IMR-90 (cell line): ENCODE measurements at regions of chr20 and their contacts with region 1.

Region 1: GRCh38 chr20:63272584-63273579 is at the start of gene ARFGAP1:
- DNase-seq: peak; percentile 87
- ATAC-seq: peak; percentile 93
- H3K4me3 ChIP-seq: peak within 1 kb of the TSS; percentile 72
- H3K27ac ChIP-seq: peak within 1 kb of the TSS; percentile 78
- H3K4me1 ChIP-seq: peaks cover 12% of the 10 kb centered on the region
- H3K27me3 ChIP-seq: peaks cover 1% of the 10 kb centered on the region; the same call in 1 of the 2 replicates
- CTCF ChIP-seq: no peak
- POLR2A ChIP-seq: peak; percentile 85
- RAD21 ChIP-seq: no peak
- total RNA-seq, gene ARFGAP1: 54.7 and 59.1 TPM in 2 replicates

Region 2: DNA sequence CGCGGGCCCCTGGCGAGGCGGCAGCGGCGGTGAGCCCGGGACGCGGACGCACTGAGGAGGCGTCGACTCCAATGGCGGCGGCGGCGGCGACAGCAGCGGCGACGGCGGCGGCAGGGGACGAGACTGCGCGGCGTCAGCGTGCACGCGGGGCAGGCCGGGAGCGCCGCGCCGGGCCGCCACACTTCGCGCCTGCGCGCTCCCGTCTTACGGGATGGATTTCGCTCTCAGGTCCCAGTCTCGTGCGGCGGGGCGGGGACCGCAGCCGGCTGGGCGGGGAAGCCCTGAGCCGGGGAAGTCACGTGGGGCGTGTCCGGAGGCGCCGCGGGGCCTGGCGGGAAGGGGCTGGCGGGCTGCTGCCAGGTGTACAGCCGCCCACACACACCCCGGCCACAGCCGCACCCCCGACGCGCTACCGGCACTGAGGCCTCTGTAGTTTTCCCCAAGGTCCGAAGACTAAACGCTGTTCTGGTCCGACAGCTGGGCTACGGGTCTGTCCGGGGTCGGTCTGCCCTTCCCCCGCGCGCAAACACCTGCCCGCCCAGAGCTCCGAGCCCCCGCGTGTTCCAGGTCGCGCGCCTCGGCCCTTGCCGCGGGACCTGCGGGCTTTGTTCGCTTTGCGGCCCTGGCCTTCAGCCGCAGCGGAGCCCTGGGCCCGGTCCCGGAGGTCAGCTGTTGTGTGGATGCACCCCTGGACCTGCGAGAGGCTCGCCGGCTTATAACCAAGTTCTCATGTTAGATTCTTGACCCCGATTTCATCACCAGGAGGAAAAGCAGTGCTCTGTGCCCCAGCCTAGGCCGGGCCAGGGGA is 56.6 kb before region 1 on chr20 and contains the start of gene YTHDF1:
- CTCF ChIA-PET with region 1: no interaction called
- POLR2A ChIA-PET with region 1: no interaction called
- dilution Hi-C with region 1: no loop called
- in situ Hi-C with region 1: no loop called
- intact Hi-C with region 1: loop called (anchors 5 kb)
- DNase-seq: peak; percentile 90
- ATAC-seq: peak; percentile 96
- H3K4me3 ChIP-seq: peak within 1 kb of the TSS; percentile 89
- H3K27ac ChIP-seq: peak within 1 kb of the TSS; percentile 79
- H3K4me1 ChIP-seq: peaks cover 6% of the 10 kb centered on the region
- H3K27me3 ChIP-seq: peaks cover 16% of the 10 kb centered on the region; the same call in 1 of the 2 replicates
- CTCF ChIP-seq: no peak
- POLR2A ChIP-seq: peak; percentile 61; the same call in 1 of the 2 replicates
- RAD21 ChIP-seq: no peak
- total RNA-seq, gene YTHDF1: 10.9 and 13.9 TPM in 2 replicates

Region 3: DNA sequence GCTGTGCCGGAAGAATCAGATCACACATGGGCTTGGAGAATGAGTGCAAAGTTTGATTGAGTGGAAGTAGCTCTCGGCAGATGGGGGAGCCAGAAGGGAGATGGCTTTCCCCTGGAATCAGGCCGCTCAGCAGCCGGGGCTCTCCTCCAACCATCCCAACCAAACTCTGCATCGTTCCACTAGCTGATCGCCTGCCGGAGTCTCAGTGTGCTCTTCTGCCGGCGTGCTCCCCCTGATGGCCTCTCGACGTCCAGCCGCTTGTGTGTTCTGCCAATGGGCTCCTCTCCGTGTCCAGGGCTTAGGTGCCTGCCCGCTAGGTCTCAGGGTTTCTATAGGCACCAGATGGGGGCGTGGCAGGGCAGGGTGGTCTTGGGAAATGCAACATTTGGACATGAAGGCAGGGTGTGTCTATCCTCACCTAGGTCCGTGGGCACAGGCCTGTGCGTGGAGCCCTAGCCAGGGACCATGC is 42.0 kb before region 1 on chr20:
- CTCF ChIA-PET with region 1: no interaction called
- POLR2A ChIA-PET with region 1: interaction called, 5 read pairs
- dilution Hi-C with region 1: no loop called
- in situ Hi-C with region 1: loop called (anchors 5 kb)
- intact Hi-C with region 1: loop called (anchors 5 kb)
- DNase-seq: peak; percentile 60
- ATAC-seq: peak; percentile 50
- H3K4me3 ChIP-seq: no peak overlapping the region
- H3K27ac ChIP-seq: no peak overlapping the region
- H3K4me1 ChIP-seq: peaks cover 22% of the 10 kb centered on the region
- H3K27me3 ChIP-seq: no peaks in the 10 kb centered on the region
- CTCF ChIP-seq: peak; percentile 57
- POLR2A ChIP-seq: peak; percentile 9; the same call in 1 of the 2 replicates
- RAD21 ChIP-seq: peak; percentile 48